Sigmoid colon (tissue), 7 donors: ENCODE measurements at regions of chr3 and their contacts with region 1.

Region 1: GRCh38 chr3:139533781-139534443 is 5.6 kb downstream of the RBP1 start:
- DNase-seq: no peak
- H3K4me3 ChIP-seq: no peak overlapping the region
- H3K27ac ChIP-seq: peak overlapping the region; percentile 59 to 72 (median 66)
- H3K4me1 ChIP-seq: peaks cover 0 to 43% (median 35%) of the 10 kb centered on the region in 4 donors
- H3K27me3 ChIP-seq: no peaks in the 10 kb centered on the region
- CTCF ChIP-seq: no peak
- EP300 ChIP-seq: no peak
- POLR2A ChIP-seq: no peak

Region 2: GRCh38 chr3:139427283-139427993 is 106.5 kb before region 1 on chr3:
- intact Hi-C with region 1: no loop called
- DNase-seq: no peak
- H3K4me3 ChIP-seq: no peak overlapping the region
- H3K27ac ChIP-seq: no peak overlapping the region
- H3K4me1 ChIP-seq: no peaks in the 10 kb centered on the region
- H3K27me3 ChIP-seq: no peaks in the 10 kb centered on the region
- CTCF ChIP-seq: peak; percentile 61 to 75 (median 68)
- EP300 ChIP-seq: no peak
- POLR2A ChIP-seq: no peak

Region 3: GRCh38 chr3:139677388-139678155 is 143.7 kb after region 1 on chr3 and contains the start of gene NMNAT3:
- intact Hi-C with region 1: loop called (anchors 10 kb)
- DNase-seq: peak; percentile 90
- H3K4me3 ChIP-seq: peak within 1 kb of the TSS; percentile 55 to 91 (median 76)
- H3K27ac ChIP-seq: peak within 1 kb of the TSS; percentile 64 to 75 (median 71)
- H3K4me1 ChIP-seq: peaks cover 0 to 16% (median 10%) of the 10 kb centered on the region in 4 donors
- H3K27me3 ChIP-seq: no peaks in the 10 kb centered on the region
- CTCF ChIP-seq: no peak
- EP300 ChIP-seq: no peak
- POLR2A ChIP-seq: no peak
- total RNA-seq, gene NMNAT3: 6.8 to 24.6 (median 11.7) TPM